Activated naive CD4-positive, alpha-beta T cell treated with anti-CD3 and anti-CD28 coated beads, Interleukin-2, amount 10 ng/mL, durations not matched to agents 7 days and 5 days (primary cell): ENCODE measurements at regions of chr6 and their contacts with region 1.

Region 1: GRCh38 chr6:47413752-47414422 is 63.7 kb upstream of the CD2AP start:
- DNase-seq: peak; percentile 55
- H3K4me3 Mint-ChIP-seq: peak overlapping the region; percentile 78
- H3K27ac Mint-ChIP-seq: peak overlapping the region; percentile 95
- H3K4me1 Mint-ChIP-seq: peaks cover 32% of the 10 kb centered on the region
- H3K27me3 Mint-ChIP-seq: peaks cover 6% of the 10 kb centered on the region

Region 2: DNA sequence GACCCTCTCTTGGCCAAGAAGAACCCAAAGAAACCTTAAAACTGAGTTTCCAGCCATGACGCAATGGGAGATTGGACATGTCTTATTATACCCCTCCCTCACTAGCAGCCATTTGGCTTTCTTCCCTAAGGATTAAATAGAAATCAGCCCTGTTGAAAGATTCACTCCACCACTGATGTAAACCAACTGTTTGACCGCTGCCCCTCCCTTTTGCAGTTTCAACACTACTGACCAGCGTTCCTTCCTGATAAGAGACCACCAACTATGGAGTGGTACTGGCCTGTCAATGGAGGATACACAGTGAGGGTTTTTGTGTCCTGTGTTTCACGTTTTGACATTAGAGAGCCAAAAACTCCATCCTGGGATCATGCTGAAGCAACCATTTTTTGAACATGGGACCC is 10.5 kb after region 1 on chr6:
- CTCF ChIA-PET with region 1: no interaction called
- DNase-seq: no peak
- H3K4me3 Mint-ChIP-seq: no peak overlapping the region
- H3K27ac Mint-ChIP-seq: no peak overlapping the region
- H3K4me1 Mint-ChIP-seq: peaks cover 17% of the 10 kb centered on the region
- H3K27me3 Mint-ChIP-seq: peaks cover 6% of the 10 kb centered on the region

Region 3: GRCh38 chr6:47477497-47478232 is 63.8 kb after region 1 on chr6 and contains the start of gene CD2AP:
- CTCF ChIA-PET with region 1: interaction called, 11 read pairs
- DNase-seq: peak; percentile 93
- H3K4me3 Mint-ChIP-seq: peak within 1 kb of the TSS; percentile 99
- H3K27ac Mint-ChIP-seq: peak within 1 kb of the TSS; percentile 99
- H3K4me1 Mint-ChIP-seq: peaks cover 37% of the 10 kb centered on the region
- H3K27me3 Mint-ChIP-seq: peaks cover 10% of the 10 kb centered on the region

Region 4: GRCh38 chr6:47631269-47631772 is 217.4 kb after region 1 on chr6:
- CTCF ChIA-PET with region 1: interaction called, 25 read pairs
- DNase-seq: peak; percentile 32
- H3K4me3 Mint-ChIP-seq: no peak overlapping the region
- H3K27ac Mint-ChIP-seq: no peak overlapping the region
- H3K4me1 Mint-ChIP-seq: peaks cover 19% of the 10 kb centered on the region
- H3K27me3 Mint-ChIP-seq: peaks cover 5% of the 10 kb centered on the region

Region 5: GRCh38 chr6:47733879-47734558 is 320.1 kb after region 1 on chr6:
- CTCF ChIA-PET with region 1: interaction called, 30 read pairs
- DNase-seq: no peak
- H3K4me3 Mint-ChIP-seq: no peak overlapping the region
- H3K27ac Mint-ChIP-seq: no peak overlapping the region
- H3K4me1 Mint-ChIP-seq: no peaks in the 10 kb centered on the region
- H3K27me3 Mint-ChIP-seq: peaks cover 6% of the 10 kb centered on the region

Region 6: DNA sequence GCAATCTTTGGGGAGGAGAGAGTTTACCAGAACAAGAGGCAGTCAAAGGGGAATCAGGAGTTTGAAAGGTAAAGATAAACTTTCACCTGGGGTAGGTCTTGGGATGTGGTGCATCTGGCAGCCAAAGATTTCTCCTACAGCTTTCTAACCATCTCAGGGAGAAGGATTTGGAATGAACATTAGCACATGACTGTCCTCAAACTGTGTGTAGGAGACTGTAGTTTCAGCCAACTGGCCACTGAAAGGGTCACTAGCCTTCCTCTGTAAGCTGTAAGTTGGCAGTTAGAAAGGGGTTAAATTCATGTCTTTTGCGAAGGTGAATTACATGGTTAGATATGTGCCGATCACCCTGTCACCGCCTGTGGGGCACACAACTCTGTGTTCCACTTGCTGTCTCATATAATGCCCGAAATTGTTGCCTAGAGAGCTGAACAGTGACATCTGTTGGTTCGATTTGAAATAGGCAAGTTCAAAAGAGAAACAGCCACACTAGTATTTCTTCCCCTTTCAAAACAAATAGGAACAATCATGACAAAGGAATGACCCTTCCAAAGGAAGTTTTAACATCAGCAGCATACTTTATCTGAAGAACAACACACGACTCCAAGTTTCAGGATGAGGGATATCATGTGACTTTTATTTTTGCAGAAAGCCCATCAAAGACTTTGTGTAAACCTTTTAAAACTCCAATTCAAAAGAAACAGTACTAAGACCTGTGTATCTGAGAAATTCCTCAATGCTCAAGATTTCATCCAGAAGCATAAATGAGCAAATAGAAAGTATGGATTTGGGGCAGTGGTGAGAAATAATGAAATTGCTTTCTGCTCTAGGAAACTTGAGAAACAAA is 366.8 kb after region 1 on chr6:
- CTCF ChIA-PET with region 1: interaction called, 23 read pairs
- DNase-seq: peak; percentile 48
- H3K4me3 Mint-ChIP-seq: no peak overlapping the region
- H3K27ac Mint-ChIP-seq: no peak overlapping the region
- H3K4me1 Mint-ChIP-seq: peaks cover 9% of the 10 kb centered on the region
- H3K27me3 Mint-ChIP-seq: peaks cover 20% of the 10 kb centered on the region